ENCODE measurements at regions of chr6 and their contacts with region 1.

Region 1: DNA sequence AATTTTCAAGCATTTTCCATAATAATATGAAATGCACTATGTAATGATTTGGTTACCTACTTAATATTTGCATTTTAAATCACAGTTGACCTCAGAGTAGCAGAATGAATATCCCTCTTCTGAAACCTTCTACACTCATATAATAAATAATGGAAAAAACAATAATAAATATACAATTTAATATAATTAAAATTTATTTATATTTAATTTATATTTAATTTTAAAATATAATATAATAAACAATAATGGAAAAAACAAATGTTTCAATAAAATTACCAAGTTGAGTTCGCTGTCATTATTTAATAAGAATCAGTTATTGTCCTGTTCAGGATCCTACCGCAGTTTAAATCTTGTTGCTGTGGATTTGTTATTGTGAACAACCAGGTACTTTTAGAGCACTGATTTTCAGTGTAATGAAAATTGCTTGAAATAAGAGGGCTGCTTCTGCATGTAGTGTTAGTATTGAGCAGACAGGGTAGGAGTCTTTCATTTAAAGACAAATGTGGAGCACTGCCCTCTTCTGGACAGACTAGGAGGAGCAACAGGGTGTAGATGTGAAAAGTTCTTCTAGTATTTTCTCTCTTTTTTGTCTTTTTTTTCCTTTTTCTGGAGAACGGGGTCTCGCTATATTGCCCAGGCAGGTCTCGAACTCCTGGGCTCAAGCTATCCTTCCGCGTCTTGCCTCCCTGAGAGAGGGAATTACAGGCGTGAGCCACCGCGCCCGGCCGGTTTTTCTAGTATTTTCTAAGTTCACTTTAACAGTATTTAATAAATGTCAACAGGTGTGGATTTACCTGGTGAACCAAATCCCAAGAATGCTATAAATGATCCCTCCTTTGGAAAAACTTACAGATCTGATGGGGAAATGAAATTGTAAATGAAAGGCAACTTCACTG is 13.6 kb downstream of the TRAPPC3L start:
- DNase-seq: peak; percentile 81 to 93 (median 91)
- H3K4me3 ChIP-seq: no peak overlapping the region
- H3K27ac ChIP-seq: no peak overlapping the region
- H3K4me1 ChIP-seq: peaks cover 0 to 9% (median 2%) of the 10 kb centered on the region in 4 experiments
- H3K27me3 ChIP-seq: no peaks in the 10 kb centered on the region

Region 2: GRCh38 chr6:116444092-116444491 is 87.8 kb before region 1 on chr6:
- CTCF ChIA-PET with region 1: interaction called, 30 read pairs
- POLR2A ChIA-PET with region 1: interaction called, 3 read pairs
- DNase-seq: peak; percentile 32 to 61 (median 59)
- H3K4me3 ChIP-seq: no peak overlapping the region
- H3K27ac ChIP-seq: no peak overlapping the region
- H3K4me1 ChIP-seq: peaks cover 13 to 43% (median 24%) of the 10 kb centered on the region in 4 experiments
- H3K27me3 ChIP-seq: no peaks in the 10 kb centered on the region

Region 3: GRCh38 chr6:116542426-116542825 is 10.5 kb after region 1 on chr6:
- CTCF ChIA-PET with region 1: interaction called, 15 read pairs
- POLR2A ChIA-PET with region 1: no interaction called
- DNase-seq: no peak
- H3K4me3 ChIP-seq: no peak overlapping the region
- H3K27ac ChIP-seq: no peak overlapping the region
- H3K4me1 ChIP-seq: no peaks in the 10 kb centered on the region
- H3K27me3 ChIP-seq: peaks cover 0 to 2% (median 0%) of the 10 kb centered on the region in 5 experiments

Region 4: GRCh38 chr6:116561377-116562018 is 29.6 kb after region 1 on chr6:
- CTCF ChIA-PET with region 1: interaction called, 10 read pairs
- POLR2A ChIA-PET with region 1: no interaction called
- DNase-seq: peak; percentile 71 to 83 (median 74)
- H3K4me3 ChIP-seq: no peak overlapping the region
- H3K27ac ChIP-seq: no peak overlapping the region
- H3K4me1 ChIP-seq: peaks cover 0 to 11% (median 4%) of the 10 kb centered on the region in 4 experiments
- H3K27me3 ChIP-seq: peaks cover 0 to 2% (median 0%) of the 10 kb centered on the region in 5 experiments

Region 5: DNA sequence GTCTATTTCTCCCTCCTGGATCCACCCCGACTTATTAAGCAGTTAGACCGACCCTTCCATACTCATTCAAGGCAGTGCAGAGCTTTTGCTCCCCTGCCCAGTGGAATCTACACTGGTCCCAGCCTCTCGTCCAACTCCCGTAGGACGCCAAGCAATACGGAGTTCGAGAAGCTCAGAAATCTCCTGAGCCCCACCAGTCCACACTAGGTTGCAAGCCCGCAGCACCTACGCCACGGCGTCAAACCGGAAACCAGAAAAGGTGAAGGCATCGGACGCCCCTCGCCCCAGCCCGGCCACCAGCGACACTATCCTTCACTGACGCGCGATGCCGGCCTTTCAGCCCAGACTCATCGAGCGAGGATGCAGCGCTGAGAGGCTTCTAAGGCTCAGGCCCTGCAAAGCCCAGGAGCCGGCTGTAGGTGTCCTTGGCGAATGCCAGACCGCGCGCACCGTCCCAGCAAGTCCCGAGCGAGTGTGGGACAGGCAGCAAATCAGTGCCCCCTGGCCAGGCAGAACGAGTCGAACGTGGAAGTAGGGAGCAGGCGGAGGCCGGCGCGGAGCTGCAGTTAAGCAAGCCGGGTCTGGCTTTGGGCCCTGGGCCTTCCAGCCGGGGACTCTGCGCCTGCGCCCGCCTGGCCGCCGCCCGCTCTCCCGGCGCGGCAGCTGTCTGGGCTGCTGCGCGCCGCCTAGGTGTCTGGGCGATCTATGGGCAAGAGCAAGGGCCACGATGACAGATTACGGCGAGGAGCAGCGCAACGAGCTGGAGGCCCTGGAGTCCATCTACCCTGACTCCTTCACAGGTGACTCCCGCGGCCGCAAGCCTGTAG is 39.1 kb after region 1 on chr6 and contains the start of gene RWDD1:
- CTCF ChIA-PET with region 1: interaction called, 14 read pairs
- POLR2A ChIA-PET with region 1: no interaction called
- DNase-seq: peak; percentile 100
- H3K4me3 ChIP-seq: peak within 1 kb of the TSS; percentile 93 to 100 (median 97)
- H3K27ac ChIP-seq: peak within 1 kb of the TSS; percentile 92 to 97
- H3K4me1 ChIP-seq: peaks cover 24 to 37% (median 32%) of the 10 kb centered on the region in 4 experiments
- H3K27me3 ChIP-seq: no peaks in the 10 kb centered on the region

Measured in common myeloid progenitor, CD34-positive (primary cell).